Panc1 (cell line): ENCODE measurements at regions of chr3 and their contacts with region 1.

Region 1: DNA sequence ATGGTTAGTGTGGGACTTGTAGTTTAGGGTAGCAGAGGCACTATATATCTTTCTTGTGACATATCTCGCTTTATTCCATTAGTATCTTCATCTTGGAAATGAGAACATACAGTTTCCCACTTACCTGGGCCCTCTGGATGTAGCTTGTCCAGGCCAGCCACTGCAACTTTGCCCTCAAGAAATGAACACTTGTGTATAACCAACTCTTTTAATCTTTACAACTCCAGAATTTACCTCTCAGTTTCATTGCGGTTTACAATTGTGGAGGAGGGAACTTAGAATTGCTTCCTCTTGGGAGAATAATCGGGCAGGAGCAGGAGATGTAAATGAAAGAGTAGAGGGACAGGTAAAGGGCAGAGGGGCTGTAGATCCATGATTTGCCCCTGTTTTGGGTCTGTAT is 18.4 kb upstream of the TRA2B start:
- DNase-seq: no peak
- ATAC-seq: no peak
- H3K4me3 ChIP-seq: no peak overlapping the region
- H3K27ac ChIP-seq: no peak overlapping the region
- H3K4me1 ChIP-seq: no peaks in the 10 kb centered on the region
- H3K27me3 ChIP-seq: no peaks in the 10 kb centered on the region
- CTCF ChIP-seq: no peak

Region 2: DNA sequence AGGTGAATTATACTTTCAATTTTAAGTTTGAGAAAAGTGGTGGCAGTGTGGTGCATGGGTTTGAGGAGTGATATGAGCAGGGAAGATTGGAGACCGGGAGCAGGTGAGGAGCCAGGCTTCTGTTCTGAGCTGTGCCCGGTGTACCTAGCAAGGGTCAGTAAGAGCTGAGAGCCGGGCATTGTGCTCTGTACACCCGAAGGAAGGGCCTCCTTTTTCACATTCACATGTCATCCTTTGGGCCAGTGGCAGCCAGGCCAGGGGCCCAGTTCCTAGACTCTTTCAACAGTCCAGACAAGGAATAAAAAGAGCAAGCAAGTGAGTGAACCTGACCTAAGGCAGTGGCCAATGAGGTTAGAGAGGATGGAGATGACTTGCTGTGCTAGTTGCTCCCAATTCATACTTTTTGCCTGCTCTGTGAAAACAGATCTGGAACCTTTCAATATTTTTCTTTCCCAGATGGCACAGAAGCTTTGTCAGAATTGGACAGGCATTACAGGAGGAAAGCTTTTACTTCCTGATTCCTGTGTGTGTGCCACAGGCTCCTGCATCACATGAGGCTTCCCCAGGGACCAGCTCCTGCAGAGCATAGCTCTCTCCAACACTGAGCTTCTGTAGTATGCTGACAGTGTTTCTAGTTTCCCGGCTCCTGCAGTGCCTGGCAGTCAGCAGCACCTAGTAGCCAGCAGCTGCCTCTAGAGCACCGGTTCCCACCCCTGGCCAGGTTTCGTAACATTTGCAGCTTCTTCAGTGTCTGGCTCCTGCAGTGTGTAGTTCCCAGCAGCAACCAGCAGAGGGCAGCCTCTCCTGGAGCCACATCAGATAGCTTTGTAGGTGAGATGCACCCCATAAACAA is 13.1 kb before region 1 on chr3:
- CTCF ChIA-PET with region 1: interaction called, 23 read pairs
- POLR2A ChIA-PET with region 1: interaction called, 8 read pairs
- in situ Hi-C with region 1: no loop called
- intact Hi-C with region 1: no loop called
- DNase-seq: peak; percentile 70
- ATAC-seq: peak; percentile 84
- H3K4me3 ChIP-seq: peak overlapping the region in 1 of 2 experiments; percentile 12; a peak in 1 of 4 replicates
- H3K27ac ChIP-seq: no peak overlapping the region
- H3K4me1 ChIP-seq: peaks cover 5% of the 10 kb centered on the region
- H3K27me3 ChIP-seq: no peaks in the 10 kb centered on the region; the same call in 1 of the 2 replicates
- CTCF ChIP-seq: peak; percentile 100

Region 3: DNA sequence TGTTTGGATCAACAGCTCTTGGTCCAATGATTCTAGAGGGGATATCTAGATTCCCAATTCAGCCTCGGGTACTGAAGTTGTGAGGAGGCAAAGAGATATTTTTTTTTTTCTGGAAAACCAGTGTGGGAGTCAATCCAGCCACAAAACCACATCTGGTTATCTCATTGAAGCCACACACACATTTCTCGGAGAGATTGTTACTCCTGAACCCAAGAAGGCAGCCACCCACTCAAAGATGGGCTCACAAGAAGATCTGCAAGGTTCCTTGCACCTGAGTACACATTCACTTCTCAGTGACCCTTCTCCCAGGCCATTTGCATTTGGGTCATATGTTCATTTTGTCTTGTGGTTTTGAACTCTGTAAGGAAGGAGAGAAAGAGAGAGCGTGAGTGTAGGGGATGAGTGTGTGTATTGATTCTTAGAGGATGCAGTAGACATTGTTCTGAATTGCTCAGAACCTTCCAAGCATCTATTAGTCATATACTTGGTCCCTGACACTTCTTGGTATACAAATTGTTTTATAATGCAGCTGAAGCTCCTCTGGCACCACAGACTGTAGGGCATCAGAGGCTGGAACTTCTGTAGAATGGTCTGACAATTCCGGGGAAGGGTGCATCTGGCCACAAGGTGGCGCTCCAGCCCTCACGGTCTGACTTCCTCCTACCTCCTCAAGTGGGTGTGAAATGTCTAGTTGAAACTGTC is 20.9 kb after region 1 on chr3:
- CTCF ChIA-PET with region 1: interaction called, 10 read pairs
- POLR2A ChIA-PET with region 1: no interaction called
- in situ Hi-C with region 1: no loop called
- intact Hi-C with region 1: no loop called
- DNase-seq: peak; percentile 57
- ATAC-seq: peak; percentile 94
- H3K4me3 ChIP-seq: no peak overlapping the region
- H3K27ac ChIP-seq: no peak overlapping the region
- H3K4me1 ChIP-seq: no peaks in the 10 kb centered on the region
- H3K27me3 ChIP-seq: no peaks in the 10 kb centered on the region
- CTCF ChIP-seq: peak; percentile 98